K562 (cell line): ENCODE measurements at regions of chr6 and their contacts with region 1.

Region 1: GRCh38 chr6:87139236-87139635 is 16.1 kb upstream of the ZNF292 start:
- DNase-seq: peak; percentile 12 to 45 (median 24)
- ATAC-seq: peak; percentile 70; the same call in 2 of the 3 replicates
- H3K4me3 ChIP-seq: no peak overlapping the region
- H3K27ac ChIP-seq: no peak overlapping the region
- H3K4me1 ChIP-seq: no peaks in the 10 kb centered on the region
- H3K27me3 ChIP-seq: no peaks in the 10 kb centered on the region
- CTCF ChIP-seq: peak; percentile 38 to 67 (median 64); a peak in 5 of 6 replicates
- EP300 ChIP-seq: no peak
- POLR2A ChIP-seq: no peak
- RAD21 ChIP-seq: peak; percentile 34 to 75

Region 2: GRCh38 chr6:87237804-87238203 is 98.6 kb after region 1 on chr6:
- CTCF ChIA-PET with region 1: interaction called, 5 read pairs
- POLR2A ChIA-PET with region 1: no interaction called
- in situ Hi-C with region 1: no loop called
- intact Hi-C with region 1: loop called (anchors 1 kb)
- DNase-seq: peak in 3 of 4 experiments; percentile 11 to 17 (median 14)
- ATAC-seq: peak; percentile 70; the same call in 2 of the 3 replicates
- H3K4me3 ChIP-seq: no peak overlapping the region
- H3K27ac ChIP-seq: no peak overlapping the region
- H3K4me1 ChIP-seq: no peaks in the 10 kb centered on the region
- H3K27me3 ChIP-seq: no peaks in the 10 kb centered on the region
- CTCF ChIP-seq: peak; percentile 15 to 51 (median 24); a peak in 3 of 6 replicates
- EP300 ChIP-seq: no peak
- POLR2A ChIP-seq: no peak
- RAD21 ChIP-seq: peak in 1 of 2 experiments; percentile 50; a peak in 2 of 4 replicates

Region 3: DNA sequence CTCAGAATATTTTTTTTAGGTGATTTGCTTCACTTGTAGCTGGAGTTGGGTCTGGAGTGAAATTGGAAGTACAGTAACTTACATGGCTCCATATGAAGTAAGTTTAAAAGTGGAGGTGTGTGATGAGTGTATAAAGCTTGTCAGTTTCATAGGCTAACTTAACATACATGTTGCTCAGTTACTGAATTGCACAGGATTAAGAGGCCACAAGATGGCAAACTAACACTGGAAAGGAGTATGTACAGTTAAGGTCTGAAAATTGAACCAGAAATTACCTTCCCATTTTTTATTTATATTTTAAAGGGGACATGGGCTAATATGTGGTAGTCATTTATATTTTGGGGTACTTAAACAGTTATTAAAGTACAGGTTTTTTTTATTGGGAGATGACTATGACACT is 137.9 kb after region 1 on chr6:
- CTCF ChIA-PET with region 1: no interaction called
- POLR2A ChIA-PET with region 1: no interaction called
- in situ Hi-C with region 1: no loop called
- intact Hi-C with region 1: loop called (anchors 5 kb)
- DNase-seq: peak in 2 of 4 experiments; percentile 25 to 55
- ATAC-seq: peak; percentile 94
- H3K4me3 ChIP-seq: no peak overlapping the region
- H3K27ac ChIP-seq: no peak overlapping the region
- H3K4me1 ChIP-seq: no peaks in the 10 kb centered on the region
- H3K27me3 ChIP-seq: peaks cover 3 to 5% of the 10 kb centered on the region in 2 experiments; a peak in 3 of 5 replicates
- CTCF ChIP-seq: peak; percentile 44 to 78 (median 55); a peak in 5 of 6 replicates
- EP300 ChIP-seq: no peak
- POLR2A ChIP-seq: no peak
- RAD21 ChIP-seq: peak; percentile 76 to 94